ENCODE measurements at regions of chr2 and their contacts with region 1.

Region 1: GRCh38 chr2:238263204-238264071 is 23.6 kb upstream of the HES6 start:
- DNase-seq: peak; percentile 73 to 87
- ATAC-seq: peak; percentile 62 to 77
- H3K4me3 ChIP-seq: no peak overlapping the region
- H3K27ac ChIP-seq: peak overlapping the region; percentile 13 to 67; a peak in 2 of 6 replicates
- H3K4me1 ChIP-seq: peaks cover 24% of the 10 kb centered on the region
- CTCF ChIP-seq: peak; percentile 74
- EP300 ChIP-seq: no peak
- POLR2A ChIP-seq: no peak
- RAD21 ChIP-seq: peak; percentile 69 to 71

Region 2: DNA sequence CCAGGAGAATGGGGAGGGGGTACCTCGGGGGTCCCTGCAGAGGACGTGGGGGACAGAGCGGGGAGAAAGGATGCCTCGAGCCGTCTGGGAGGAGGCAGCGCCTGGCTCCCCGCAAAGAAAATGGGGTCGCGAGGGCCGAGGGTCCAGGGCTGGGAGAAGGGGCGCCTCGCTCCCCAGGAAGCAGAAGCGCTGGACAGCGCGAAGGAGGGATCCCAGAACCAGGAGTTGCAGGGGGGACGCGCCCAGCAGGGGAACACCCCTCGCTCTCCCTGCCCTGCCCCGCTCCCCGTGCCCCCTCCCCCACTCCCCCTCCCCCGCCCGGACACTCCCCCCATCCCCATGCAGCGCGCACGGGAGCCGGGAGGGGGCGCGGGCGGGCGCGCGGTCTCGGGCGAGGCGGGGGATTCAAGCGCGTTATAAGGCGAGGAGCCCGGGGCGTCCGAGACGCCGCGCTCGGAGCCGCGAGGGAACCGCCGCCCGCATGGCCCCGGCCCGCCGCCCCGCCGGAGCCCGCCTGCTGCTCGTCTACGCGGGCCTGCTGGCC is 104.8 kb before region 1 on chr2 and contains the start of gene ERFE:
- CTCF ChIA-PET with region 1: interaction called, 15 read pairs
- POLR2A ChIA-PET with region 1: no interaction called
- DNase-seq: peak; percentile 49 to 58
- ATAC-seq: peak; percentile 40 to 66; a peak in 5 of 6 replicates
- H3K4me3 ChIP-seq: peak within 1 kb of the TSS; percentile 59
- H3K27ac ChIP-seq: peak within 1 kb of the TSS; percentile 72 to 98
- H3K4me1 ChIP-seq: peaks cover 15% of the 10 kb centered on the region; the same call in 2 of the 3 replicates
- CTCF ChIP-seq: peak; percentile 64
- EP300 ChIP-seq: no peak
- POLR2A ChIP-seq: 0 out of 2 replicates have a peak, but pooled peaks have one; percentile 13
- RAD21 ChIP-seq: peak in 1 of 2 experiments; percentile 46; a peak in 3 of 5 replicates
- polyA plus RNA-seq, gene ERFE: 2.6 and 3.7 TPM in 2 replicates

Region 3: GRCh38 chr2:238277695-238278094 is 14.3 kb after region 1 on chr2:
- CTCF ChIA-PET with region 1: interaction called, 351 read pairs
- POLR2A ChIA-PET with region 1: no interaction called
- DNase-seq: peak in 1 of 2 experiments; percentile 52
- ATAC-seq: peak in 1 of 2 experiments; percentile 47; a peak in 3 of 6 replicates
- H3K4me3 ChIP-seq: no peak overlapping the region
- H3K27ac ChIP-seq: no peak overlapping the region
- H3K4me1 ChIP-seq: peaks cover 7% of the 10 kb centered on the region; the same call in 2 of the 3 replicates
- CTCF ChIP-seq: peak; percentile 20; the same call in 1 of the 3 replicates
- EP300 ChIP-seq: no peak
- POLR2A ChIP-seq: no peak
- RAD21 ChIP-seq: 0 out of 5 replicates have a peak, but pooled peaks of 1 of the 2 experiments have one; percentile 19

Region 4: DNA sequence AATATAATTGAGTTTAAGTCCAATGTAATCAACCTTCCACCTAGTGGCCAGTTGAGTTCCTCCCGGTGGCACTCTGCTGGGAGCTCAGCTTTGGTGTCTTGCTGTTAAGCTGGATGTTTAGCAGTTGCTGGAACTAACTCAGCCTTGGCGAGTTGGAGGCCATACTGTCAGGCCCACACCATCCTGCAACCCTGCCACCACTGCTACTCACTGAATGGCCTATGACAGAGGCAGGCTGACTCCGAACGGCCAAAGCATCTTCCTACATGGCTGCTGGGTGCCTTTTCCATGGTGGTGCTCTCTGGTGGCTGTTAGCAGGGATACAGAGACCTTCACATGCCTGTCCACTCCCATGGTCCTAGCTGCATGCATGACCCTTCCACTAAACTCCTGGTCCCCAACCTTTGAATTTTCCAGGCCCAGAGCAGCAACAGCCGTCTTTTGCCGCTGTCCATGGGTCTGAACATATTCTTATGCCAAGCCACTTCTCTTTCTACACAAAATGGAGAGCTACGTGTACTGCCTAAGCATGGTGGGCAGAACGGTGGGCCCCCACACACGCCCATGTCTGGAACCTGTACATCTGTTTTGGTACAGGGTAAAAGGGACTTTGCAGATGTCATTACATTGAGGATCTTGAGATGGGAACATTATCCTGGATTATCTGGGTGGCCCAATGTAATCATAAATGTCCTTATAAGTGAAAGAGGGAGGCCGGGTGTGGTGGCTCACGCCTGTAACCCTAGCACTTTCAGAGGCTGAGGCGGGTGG is 41.8 kb after region 1 on chr2:
- CTCF ChIA-PET with region 1: interaction called, 19 read pairs
- POLR2A ChIA-PET with region 1: no interaction called
- DNase-seq: peak in 1 of 2 experiments; percentile 61
- ATAC-seq: peak; percentile 70 to 81
- H3K4me3 ChIP-seq: no peak overlapping the region
- H3K27ac ChIP-seq: no peak overlapping the region
- H3K4me1 ChIP-seq: peaks cover 26% of the 10 kb centered on the region
- CTCF ChIP-seq: peak; percentile 37
- EP300 ChIP-seq: no peak
- POLR2A ChIP-seq: no peak
- RAD21 ChIP-seq: peak; percentile 21 to 31; a peak in 2 of 5 replicates

Region 5: DNA sequence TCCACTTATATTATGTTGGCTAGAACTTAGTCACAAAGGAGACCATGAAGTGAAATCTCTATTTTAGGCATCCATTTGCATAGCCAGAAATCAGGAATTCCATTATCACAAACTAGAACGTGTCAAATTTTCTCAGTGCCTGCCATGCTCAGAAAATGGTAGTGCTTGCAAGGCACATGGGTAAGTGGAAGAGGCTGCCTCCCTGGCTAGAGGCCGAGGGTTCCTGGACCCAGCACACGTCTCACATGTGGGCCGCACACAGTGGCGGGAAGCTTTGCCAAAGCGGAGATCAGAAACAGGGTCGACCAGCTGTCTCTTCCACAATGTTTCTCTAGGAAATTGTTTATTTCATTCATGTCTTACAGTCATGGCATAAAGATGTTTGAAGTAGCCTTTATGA is 99.2 kb after region 1 on chr2:
- CTCF ChIA-PET with region 1: interaction called, 13 read pairs
- POLR2A ChIA-PET with region 1: no interaction called
- DNase-seq: no peak
- ATAC-seq: no peak
- H3K4me3 ChIP-seq: no peak overlapping the region
- H3K27ac ChIP-seq: no peak overlapping the region
- H3K4me1 ChIP-seq: peaks cover under 1% of the 10 kb centered on the region; the same call in 2 of the 3 replicates
- CTCF ChIP-seq: no peak
- EP300 ChIP-seq: no peak
- POLR2A ChIP-seq: no peak
- RAD21 ChIP-seq: no peak